HCT116 (cell line): ENCODE measurements at regions of chr21 and their contacts with region 1.

Region 1: DNA sequence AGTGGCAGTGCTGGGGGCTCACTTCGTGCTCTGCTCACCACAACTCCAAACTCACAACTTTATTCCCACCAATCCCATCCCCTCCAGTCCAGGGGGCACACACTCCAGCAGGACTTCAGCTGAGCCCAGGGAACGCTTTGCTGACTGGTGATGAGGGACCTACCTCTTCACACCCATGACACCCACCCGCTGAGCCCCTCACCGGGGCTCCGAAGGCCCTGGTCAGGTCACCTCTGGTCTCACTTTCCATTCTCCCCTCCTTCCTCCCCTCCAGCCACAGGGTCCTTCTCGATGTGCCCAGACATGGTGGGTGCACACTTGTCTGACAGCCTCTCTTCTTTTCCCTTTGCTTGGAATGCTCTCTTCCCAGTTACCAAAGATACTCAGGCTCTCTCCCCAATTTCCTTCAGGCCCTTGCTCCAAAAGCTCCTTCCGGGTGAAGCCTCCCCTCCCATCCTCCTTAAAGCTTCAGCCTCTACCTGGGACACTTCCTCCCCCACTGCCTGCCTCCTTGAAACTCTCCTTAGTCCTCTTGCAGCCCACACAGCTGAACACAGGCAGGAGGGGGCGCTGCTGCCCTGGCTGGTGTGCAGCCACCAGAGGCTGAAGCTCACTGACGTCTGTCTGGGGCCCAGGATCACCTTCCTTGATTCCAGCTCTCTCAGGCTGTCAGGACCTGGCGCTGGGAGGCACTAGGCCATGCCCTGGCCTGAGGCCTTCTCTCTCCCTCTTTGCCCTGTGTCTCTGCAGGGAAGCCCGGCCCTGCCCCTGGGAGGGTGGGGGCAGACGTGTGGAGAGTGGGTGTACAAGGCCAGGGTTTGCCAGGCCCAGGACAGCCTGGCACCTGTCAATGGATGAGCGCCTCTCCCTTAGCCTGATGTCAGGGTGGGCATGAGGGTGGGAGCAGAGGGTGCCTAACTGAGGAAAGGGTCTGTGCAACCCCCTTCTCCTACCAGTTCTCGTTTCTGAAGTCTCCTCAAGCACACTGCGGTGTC is 1.6 kb downstream of the KCNE1 start:
- DNase-seq: peak; percentile 18
- ATAC-seq: peak; percentile 93
- H3K4me3 ChIP-seq: no peak overlapping the region
- H3K27ac ChIP-seq: no peak overlapping the region
- H3K4me1 ChIP-seq: no peaks in the 10 kb centered on the region; a peak in 1 of 4 replicates
- H3K27me3 ChIP-seq: no peaks in the 10 kb centered on the region
- CTCF ChIP-seq: peak; percentile 70 to 72 (median 71); a peak in 5 of 6 replicates
- POLR2A ChIP-seq: no peak
- RAD21 ChIP-seq: peak; percentile 83

Region 2: GRCh38 chr21:34252751-34253150 is 257.7 kb before region 1 on chr21:
- CTCF ChIA-PET with region 1: no interaction called
- POLR2A ChIA-PET with region 1: no interaction called
- RAD21 ChIA-PET with region 1: no interaction called
- intact Hi-C with region 1: no loop called
- DNase-seq: no peak
- ATAC-seq: no peak
- H3K4me3 ChIP-seq: no peak overlapping the region
- H3K27ac ChIP-seq: no peak overlapping the region
- H3K4me1 ChIP-seq: no peaks in the 10 kb centered on the region
- H3K27me3 ChIP-seq: no peaks in the 10 kb centered on the region
- CTCF ChIP-seq: no peak
- POLR2A ChIP-seq: no peak
- RAD21 ChIP-seq: no peak

Region 3: GRCh38 chr21:34313116-34313515 is 197.3 kb before region 1 on chr21:
- CTCF ChIA-PET with region 1: no interaction called
- POLR2A ChIA-PET with region 1: no interaction called
- RAD21 ChIA-PET with region 1: no interaction called
- intact Hi-C with region 1: no loop called
- DNase-seq: no peak
- ATAC-seq: no peak
- H3K4me3 ChIP-seq: no peak overlapping the region
- H3K27ac ChIP-seq: no peak overlapping the region
- H3K4me1 ChIP-seq: no peaks in the 10 kb centered on the region
- H3K27me3 ChIP-seq: peaks cover 11% of the 10 kb centered on the region; the same call in 1 of the 2 replicates
- CTCF ChIP-seq: no peak
- POLR2A ChIP-seq: no peak
- RAD21 ChIP-seq: no peak

Region 4: DNA sequence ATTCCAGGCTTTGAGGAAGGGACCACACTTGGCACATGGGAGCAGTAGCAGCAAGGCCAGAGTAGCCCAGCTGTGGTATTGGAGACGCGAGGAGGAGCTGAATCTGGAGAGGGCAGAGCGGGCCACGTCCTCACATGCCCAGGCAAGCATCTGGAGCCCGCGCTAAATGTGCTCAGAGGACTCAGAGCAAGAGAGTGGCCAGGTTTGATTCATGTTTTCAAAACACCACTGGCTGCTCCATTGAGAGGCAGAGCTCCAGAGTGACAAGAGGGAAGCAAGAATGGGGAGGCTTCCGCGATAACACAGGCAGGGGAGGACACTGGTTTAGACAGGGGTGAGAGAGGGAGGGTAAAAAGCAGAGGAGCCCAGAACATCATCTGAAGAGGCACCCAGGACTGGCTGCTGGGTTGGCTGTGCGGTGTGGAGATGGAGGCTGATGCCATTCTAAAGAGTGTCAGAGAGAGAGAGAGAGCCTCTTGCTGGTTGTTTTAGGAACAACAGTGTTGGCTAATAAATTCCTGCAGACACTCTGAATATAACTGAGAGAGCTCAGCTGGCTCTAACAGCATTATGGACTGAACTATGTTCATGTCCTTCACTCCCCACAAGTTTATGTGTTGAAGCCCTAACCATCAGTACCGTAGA is 72.2 kb after region 1 on chr21:
- CTCF ChIA-PET with region 1: interaction called, 10 read pairs
- POLR2A ChIA-PET with region 1: no interaction called
- RAD21 ChIA-PET with region 1: no interaction called
- intact Hi-C with region 1: no loop called
- DNase-seq: no peak
- ATAC-seq: peak; percentile 92
- H3K4me3 ChIP-seq: no peak overlapping the region
- H3K27ac ChIP-seq: no peak overlapping the region
- H3K4me1 ChIP-seq: no peaks in the 10 kb centered on the region; a peak in 1 of 4 replicates
- H3K27me3 ChIP-seq: no peaks in the 10 kb centered on the region
- CTCF ChIP-seq: peak; percentile 25 to 50 (median 42); a peak in 4 of 6 replicates
- POLR2A ChIP-seq: no peak
- RAD21 ChIP-seq: peak; percentile 67

Region 5: GRCh38 chr21:34603002-34603709 is 92.7 kb after region 1 on chr21:
- CTCF ChIA-PET with region 1: interaction called, 23 read pairs
- POLR2A ChIA-PET with region 1: no interaction called
- RAD21 ChIA-PET with region 1: no interaction called
- intact Hi-C with region 1: loop called (anchors 1 kb)
- DNase-seq: no peak
- ATAC-seq: peak; percentile 83
- H3K4me3 ChIP-seq: no peak overlapping the region
- H3K27ac ChIP-seq: no peak overlapping the region
- H3K4me1 ChIP-seq: peaks cover 19 to 27% of the 10 kb centered on the region in 2 experiments
- H3K27me3 ChIP-seq: no peaks in the 10 kb centered on the region
- CTCF ChIP-seq: peak; percentile 53 to 71 (median 63); a peak in 5 of 6 replicates
- POLR2A ChIP-seq: no peak
- RAD21 ChIP-seq: peak; percentile 82

Region 6: GRCh38 chr21:34630536-34631143 is 120.2 kb after region 1 on chr21:
- CTCF ChIA-PET with region 1: interaction called, 8 read pairs
- POLR2A ChIA-PET with region 1: no interaction called
- RAD21 ChIA-PET with region 1: interaction called in 1 of 2 experiments, 3 read pairs
- intact Hi-C with region 1: loop called (anchors 1 kb)
- DNase-seq: peak; percentile 45
- ATAC-seq: peak; percentile 86
- H3K4me3 ChIP-seq: no peak overlapping the region
- H3K27ac ChIP-seq: no peak overlapping the region
- H3K4me1 ChIP-seq: no peaks in the 10 kb centered on the region
- H3K27me3 ChIP-seq: 0 out of 2 replicates have a peak, but pooled peaks cover 7% of the 10 kb centered on the region
- CTCF ChIP-seq: peak; percentile 79 to 86 (median 80); a peak in 5 of 6 replicates
- POLR2A ChIP-seq: no peak
- RAD21 ChIP-seq: peak; percentile 89

Region 7: GRCh38 chr21:34762761-34763160 is 252.3 kb after region 1 on chr21:
- CTCF ChIA-PET with region 1: no interaction called
- POLR2A ChIA-PET with region 1: no interaction called
- RAD21 ChIA-PET with region 1: no interaction called
- intact Hi-C with region 1: no loop called
- DNase-seq: no peak
- ATAC-seq: peak; percentile 53; the same call in 1 of the 2 replicates
- H3K4me3 ChIP-seq: no peak overlapping the region
- H3K27ac ChIP-seq: no peak overlapping the region
- H3K4me1 ChIP-seq: no peaks in the 10 kb centered on the region
- H3K27me3 ChIP-seq: no peaks in the 10 kb centered on the region
- CTCF ChIP-seq: peak in 1 of 3 experiments; percentile 28; a peak in 1 of 6 replicates
- POLR2A ChIP-seq: no peak
- RAD21 ChIP-seq: no peak

Region 8: DNA sequence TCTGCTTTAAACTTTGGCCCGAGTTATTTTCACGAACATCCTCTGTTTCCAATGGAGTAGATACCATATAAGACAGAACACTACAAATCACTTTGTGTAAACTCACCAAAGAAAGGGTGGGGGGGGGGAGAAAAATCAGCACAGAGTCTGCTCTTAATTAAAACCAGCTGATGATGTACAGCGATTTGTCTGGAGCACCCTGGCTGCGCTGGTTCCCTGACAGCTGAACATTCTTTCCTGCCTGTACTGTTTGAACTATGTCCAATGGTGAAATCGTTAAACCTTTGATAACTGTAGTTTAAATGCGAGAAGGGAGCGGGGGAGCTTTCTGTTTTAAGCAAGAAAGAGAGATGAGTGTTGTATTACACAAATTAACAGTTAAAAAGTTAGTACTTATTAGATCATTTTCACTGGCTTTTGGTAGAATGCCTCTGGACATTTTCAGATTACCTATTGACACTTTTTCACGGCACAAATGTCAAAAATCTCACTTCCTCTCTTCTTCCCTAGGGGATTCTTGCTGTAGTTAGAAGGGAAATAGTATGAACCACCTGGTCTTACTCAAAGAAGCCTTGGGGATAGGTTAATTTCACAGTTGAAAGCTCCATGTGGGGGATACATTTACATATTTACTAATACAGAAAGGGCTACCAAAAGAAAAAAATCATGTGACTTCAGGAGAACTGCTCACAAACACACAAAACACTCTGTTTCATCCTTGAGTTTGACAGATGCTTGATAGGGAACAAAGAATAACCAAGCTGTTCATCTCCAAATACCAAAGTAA is 678.8 kb after region 1 on chr21:
- CTCF ChIA-PET with region 1: no interaction called
- POLR2A ChIA-PET with region 1: no interaction called
- RAD21 ChIA-PET with region 1: no interaction called
- intact Hi-C with region 1: no loop called
- DNase-seq: no peak
- ATAC-seq: no peak
- H3K4me3 ChIP-seq: no peak overlapping the region
- H3K27ac ChIP-seq: no peak overlapping the region; the same call in 1 of the 2 replicates
- H3K4me1 ChIP-seq: peaks cover 12 to 23% of the 10 kb centered on the region in 2 experiments
- H3K27me3 ChIP-seq: 0 out of 2 replicates have a peak, but pooled peaks cover 3% of the 10 kb centered on the region
- CTCF ChIP-seq: no peak
- POLR2A ChIP-seq: no peak
- RAD21 ChIP-seq: no peak